HEK293T (cell line): ENCODE measurements at regions of chr1 and their contacts with region 1.

Region 1: GRCh38 chr1:156985663-156986062 is 59.9 kb downstream of the ARHGEF11 start:
- DNase-seq: no peak

Region 2: DNA sequence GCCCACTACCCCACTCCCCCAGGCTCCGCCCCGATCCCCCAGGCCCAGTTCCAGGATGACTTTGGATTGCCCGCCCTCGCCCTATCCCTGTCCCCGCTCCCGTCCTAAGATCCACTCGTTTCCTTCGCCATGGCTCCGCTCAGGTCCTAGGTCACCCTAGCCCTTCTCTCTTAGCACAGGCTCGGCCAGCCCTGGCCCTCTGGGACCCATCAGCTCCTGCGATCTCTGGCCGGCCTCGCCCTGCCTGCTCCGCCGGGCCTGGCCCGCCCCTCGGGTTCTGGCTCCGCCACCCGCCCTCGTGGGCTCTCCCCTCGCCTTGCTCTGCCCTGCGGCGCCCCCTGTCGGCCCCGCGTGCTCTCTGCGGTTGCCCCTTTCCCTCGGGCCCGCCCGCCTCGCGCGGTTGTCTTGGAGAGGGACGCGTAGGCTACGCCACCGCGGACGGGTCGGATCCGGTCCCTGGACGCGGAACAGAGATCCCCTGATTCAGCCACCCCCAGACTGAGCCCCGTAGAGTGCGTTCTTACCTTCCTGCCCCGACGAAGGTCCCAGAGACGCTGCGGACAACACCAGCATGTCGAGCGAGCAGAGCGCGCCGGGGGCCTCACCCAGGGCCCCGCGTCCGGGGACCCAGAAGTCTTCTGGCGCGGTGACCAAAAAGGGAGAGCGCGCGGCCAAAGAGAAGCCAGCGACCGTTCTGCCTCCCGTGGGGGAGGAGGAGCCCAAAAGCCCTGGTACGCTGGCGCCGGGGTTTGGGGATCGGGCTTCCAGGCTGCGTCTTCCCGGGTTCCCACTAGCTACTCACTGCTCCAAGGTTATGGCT is 65.2 kb before region 1 on chr1 and contains the start of gene LRRC71:
- CTCF ChIA-PET with region 1: no interaction called
- POLR2A ChIA-PET with region 1: no interaction called
- DNase-seq: peak; percentile 99

Region 3: DNA sequence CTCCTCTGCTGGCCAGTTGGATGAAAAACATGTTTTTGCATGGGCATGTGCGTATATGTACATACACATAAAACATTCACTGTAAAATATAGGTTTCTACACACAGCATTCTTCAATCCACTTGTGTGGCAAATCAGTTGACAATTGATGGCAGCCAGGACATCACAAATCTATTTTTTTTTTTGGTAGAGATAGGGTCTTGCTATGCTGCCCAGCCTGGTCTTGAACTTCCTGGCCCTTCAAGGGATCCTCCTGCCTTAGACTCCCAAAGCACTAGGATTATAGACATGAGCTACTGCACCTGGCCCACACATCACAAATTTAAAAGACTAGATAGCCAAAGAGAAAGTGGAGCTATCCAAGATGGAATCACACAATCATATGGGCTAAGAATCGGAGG is 20.3 kb after region 1 on chr1:
- CTCF ChIA-PET with region 1: interaction called, 12 read pairs
- POLR2A ChIA-PET with region 1: no interaction called
- DNase-seq: no peak

Region 4: GRCh38 chr1:157117527-157118057 is 131.9 kb after region 1 on chr1:
- CTCF ChIA-PET with region 1: no interaction called
- POLR2A ChIA-PET with region 1: no interaction called
- DNase-seq: no peak

Region 5: GRCh38 chr1:157163273-157164127 is 177.8 kb after region 1 on chr1:
- CTCF ChIA-PET with region 1: no interaction called
- POLR2A ChIA-PET with region 1: no interaction called
- DNase-seq: peak; percentile 88